ENCODE measurements at regions of chr16 and their contacts with region 1.

Region 1: DNA sequence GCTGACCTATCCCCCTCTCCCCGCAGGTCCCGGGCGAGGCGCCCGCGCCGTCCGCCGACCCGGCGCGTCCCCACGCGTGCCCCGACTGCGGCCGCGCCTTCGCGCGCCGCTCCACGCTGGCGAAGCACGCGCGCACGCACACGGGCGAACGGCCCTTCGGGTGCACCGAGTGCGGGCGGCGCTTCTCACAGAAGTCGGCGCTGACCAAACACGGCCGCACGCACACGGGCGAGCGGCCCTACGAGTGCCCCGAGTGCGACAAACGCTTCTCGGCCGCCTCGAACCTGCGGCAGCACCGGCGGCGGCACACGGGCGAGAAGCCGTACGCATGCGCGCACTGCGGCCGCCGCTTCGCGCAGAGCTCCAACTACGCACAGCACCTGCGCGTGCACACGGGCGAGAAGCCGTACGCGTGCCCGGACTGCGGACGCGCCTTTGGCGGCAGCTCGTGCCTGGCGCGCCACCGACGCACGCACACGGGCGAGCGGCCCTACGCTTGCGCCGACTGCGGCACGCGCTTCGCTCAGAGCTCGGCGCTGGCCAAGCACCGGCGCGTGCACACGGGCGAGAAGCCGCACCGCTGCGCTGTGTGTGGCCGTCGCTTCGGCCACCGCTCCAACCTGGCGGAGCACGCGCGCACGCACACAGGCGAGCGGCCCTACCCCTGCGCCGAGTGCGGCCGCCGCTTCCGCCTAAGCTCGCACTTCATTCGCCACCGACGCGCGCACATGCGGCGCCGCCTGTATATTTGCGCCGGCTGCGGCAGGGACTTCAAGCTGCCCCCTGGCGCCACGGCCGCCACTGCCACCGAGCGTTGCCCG is 10.3 kb downstream of the ZNF771 start:
- DNase-seq: peak; percentile 82 to 94 (median 88)
- ATAC-seq: peak; percentile 80 to 85
- H3K4me3 Mint-ChIP-seq: peak overlapping the region; percentile 22 to 83 (median 72)
- H3K27ac Mint-ChIP-seq: peak overlapping the region in 8 of 10 donors; percentile 15 to 91 (median 83)
- H3K4me1 Mint-ChIP-seq: peaks cover 8 to 17% (median 11%) of the 10 kb centered on the region in 4 donors
- H3K27me3 Mint-ChIP-seq: no peaks in the 10 kb centered on the region

Region 2: GRCh38 chr16:30091474-30092372 is 326.0 kb before region 1 on chr16 and contains the start of gene TBX6:
- POLR2A ChIA-PET with region 1: interaction called, 13 read pairs
- DNase-seq: peak; percentile 86 to 93 (median 92)
- ATAC-seq: peak; percentile 77 to 81
- H3K4me3 Mint-ChIP-seq: peak within 1 kb of the TSS; percentile 80 to 93 (median 91)
- H3K27ac Mint-ChIP-seq: peak within 1 kb of the TSS; percentile 88 to 98 (median 94)
- H3K4me1 Mint-ChIP-seq: peaks cover 30 to 63% (median 57%) of the 10 kb centered on the region in 4 donors
- H3K27me3 Mint-ChIP-seq: no peaks in the 10 kb centered on the region
- polyA plus RNA-seq, gene TBX6: 0.15 to 0.25 (median 0.25) TPM

Region 3: GRCh38 chr16:30378236-30379204 is 39.2 kb before region 1 on chr16:
- POLR2A ChIA-PET with region 1: interaction called, 166 read pairs
- DNase-seq: peak; percentile 76 to 100 (median 99)
- ATAC-seq: peak; percentile 74 to 79
- H3K4me3 Mint-ChIP-seq: peak overlapping the region; percentile 95 to 100 (median 98)
- H3K27ac Mint-ChIP-seq: peak overlapping the region; percentile 99 to 100 (median 100)
- H3K4me1 Mint-ChIP-seq: peaks cover 29 to 71% (median 68%) of the 10 kb centered on the region in 4 donors
- H3K27me3 Mint-ChIP-seq: no peaks in the 10 kb centered on the region

Region 4: GRCh38 chr16:30407102-30407803 is 10.5 kb before region 1 on chr16 and contains the start of gene ZNF771:
- POLR2A ChIA-PET with region 1: interaction called, 72 read pairs
- DNase-seq: peak; percentile 65 to 92 (median 80)
- ATAC-seq: peak; percentile 81 to 87
- H3K4me3 Mint-ChIP-seq: peak within 1 kb of the TSS; percentile 88 to 100 (median 97)
- H3K27ac Mint-ChIP-seq: peak within 1 kb of the TSS; percentile 82 to 96 (median 95)
- H3K4me1 Mint-ChIP-seq: peaks cover 18 to 36% (median 29%) of the 10 kb centered on the region in 4 donors
- H3K27me3 Mint-ChIP-seq: peaks cover 0 to 3% (median 0%) of the 10 kb centered on the region in 5 donors
- polyA plus RNA-seq, gene ZNF771: 2.1 to 6.7 (median 3.8) TPM

Region 5: DNA sequence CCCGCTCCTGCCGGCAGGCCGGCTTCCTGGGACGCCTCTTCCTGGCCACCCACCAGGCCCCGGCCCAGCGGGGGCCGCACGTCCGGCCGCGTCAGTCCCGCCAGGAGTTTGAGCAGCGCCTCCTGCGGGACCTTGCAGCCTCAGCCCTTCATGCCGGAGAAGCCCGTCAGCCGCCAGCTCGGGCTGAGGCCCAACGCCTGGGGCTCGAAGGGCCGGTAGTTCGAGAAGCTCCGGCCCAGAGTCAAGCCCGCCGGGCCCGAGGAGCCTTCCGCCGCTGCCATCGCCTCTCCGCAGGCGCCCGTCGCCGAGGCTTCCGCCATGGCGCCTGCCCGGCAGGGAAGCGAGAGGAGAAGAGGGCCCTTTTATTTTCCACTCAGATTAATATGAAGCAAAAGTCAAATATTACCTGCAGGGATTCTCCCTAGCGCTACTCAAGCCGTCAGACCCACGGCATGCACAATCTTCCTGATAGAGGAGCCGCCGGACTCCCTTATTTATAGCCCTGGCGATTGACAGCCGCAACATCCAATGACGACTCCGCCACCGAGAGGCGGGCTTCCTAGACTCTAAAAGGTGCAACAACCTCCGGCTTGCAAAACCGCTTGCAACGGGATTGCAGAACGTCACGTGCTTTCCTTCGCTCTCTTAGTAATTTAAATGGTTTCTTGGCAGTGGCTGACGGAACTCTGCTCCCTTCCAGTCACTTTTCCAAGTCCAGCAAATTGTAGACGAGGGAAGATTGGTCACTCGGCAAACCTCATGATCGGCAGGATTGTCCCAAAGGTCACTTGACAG is 27.9 kb after region 1 on chr16 and contains the start of gene SEPHS2:
- POLR2A ChIA-PET with region 1: interaction called, 11 read pairs
- DNase-seq: peak; percentile 83 to 99 (median 94)
- ATAC-seq: peak; percentile 97
- H3K4me3 Mint-ChIP-seq: peak within 1 kb of the TSS; percentile 86 to 98 (median 96)
- H3K27ac Mint-ChIP-seq: peak within 1 kb of the TSS; percentile 95 to 99 (median 97)
- H3K4me1 Mint-ChIP-seq: peaks cover 13 to 49% (median 43%) of the 10 kb centered on the region in 4 donors
- H3K27me3 Mint-ChIP-seq: no peaks in the 10 kb centered on the region
- polyA plus RNA-seq, gene SEPHS2: 45.5 to 60.7 (median 55.0) TPM

Region 6: DNA sequence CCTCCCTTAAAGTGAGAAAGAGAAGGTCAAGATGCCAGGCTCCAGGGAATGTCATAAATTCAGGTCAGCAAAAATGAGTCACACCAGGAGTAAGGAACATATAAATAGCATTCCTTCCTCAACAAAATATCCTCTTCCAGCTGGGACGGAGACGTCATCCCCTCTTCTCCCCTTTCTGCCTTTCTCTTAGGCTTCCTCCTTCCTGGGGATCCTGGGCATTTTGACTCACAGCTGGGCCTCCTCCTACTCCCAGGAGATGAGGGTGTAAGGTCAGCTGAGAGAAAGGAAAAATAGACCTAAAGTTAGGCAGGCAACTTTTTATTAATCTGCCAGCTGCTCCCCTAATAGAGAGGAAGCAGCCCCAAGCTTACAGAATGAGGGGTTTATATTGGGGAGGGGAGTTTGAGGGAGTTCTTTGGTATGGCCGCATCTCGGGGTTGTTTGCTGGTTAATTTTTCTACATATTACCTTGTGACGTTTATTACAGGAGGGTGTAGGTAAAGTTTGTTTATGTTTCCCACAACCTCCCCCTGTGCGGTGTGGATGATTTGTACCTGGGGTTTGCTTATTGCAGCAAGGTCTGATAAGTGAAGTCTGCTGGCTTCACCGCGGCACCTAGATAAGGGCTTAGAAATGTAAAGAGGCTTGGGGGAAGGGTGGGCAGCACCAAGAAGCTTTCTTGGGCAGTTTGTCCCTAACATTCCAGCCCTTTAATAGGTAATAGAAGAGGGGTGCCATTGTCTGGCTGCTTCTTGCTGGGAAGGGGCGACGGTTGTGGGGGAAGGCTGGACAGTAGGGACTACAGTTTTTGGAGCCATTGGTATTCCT is 124.0 kb after region 1 on chr16:
- POLR2A ChIA-PET with region 1: no interaction called
- DNase-seq: no peak
- ATAC-seq: no peak
- H3K4me3 Mint-ChIP-seq: no peak overlapping the region
- H3K27ac Mint-ChIP-seq: no peak overlapping the region
- H3K4me1 Mint-ChIP-seq: peaks cover 10 to 20% (median 16%) of the 10 kb centered on the region in 4 donors
- H3K27me3 Mint-ChIP-seq: no peaks in the 10 kb centered on the region

Region 7: DNA sequence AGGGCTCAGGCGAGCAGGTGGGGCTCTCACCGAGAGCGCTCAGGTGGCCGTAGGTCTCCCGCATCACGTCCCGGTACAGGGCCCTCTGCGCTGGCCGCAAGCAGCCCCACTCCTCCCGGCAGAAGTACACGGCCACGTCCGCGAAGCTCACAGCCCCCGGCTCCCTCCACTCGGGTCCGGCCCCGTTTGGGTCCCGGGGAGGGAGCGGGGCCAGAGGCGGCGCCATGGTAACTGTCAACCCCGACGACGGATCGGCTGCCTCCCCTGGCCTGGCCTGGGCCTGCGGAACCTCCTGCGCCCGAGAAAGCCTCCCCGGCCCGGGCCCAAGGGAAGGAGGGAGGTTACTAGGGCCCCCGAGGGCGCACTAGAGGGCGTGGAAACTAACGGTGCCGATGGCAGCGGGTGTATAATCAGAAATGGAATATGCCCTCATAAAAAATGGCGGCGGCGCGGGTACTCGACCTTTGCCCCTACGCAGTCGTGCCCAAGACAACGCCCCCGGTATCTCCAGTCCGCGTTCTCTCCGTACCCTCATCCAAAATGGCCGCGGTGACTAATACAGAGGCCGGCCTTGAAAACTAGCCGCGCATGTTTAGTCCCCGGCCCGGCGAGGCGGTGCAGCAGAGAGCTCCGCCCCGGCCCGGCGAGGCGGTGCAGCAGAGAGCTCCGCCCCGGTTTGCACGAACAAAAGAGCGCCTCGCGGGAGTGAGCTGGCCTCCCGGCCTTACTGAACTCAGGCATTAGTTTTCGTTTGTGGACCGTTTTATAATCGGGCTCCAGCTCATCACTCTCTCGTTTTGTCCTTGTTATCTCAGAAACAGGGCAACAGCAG is 140.4 kb after region 1 on chr16 and contains the start of gene ZNF764:
- POLR2A ChIA-PET with region 1: interaction called, 11 read pairs
- DNase-seq: peak; percentile 81 to 98 (median 93)
- ATAC-seq: peak; percentile 90
- H3K4me3 Mint-ChIP-seq: peak within 1 kb of the TSS; percentile 82 to 93 (median 86)
- H3K27ac Mint-ChIP-seq: peak within 1 kb of the TSS; percentile 85 to 97 (median 94)
- H3K4me1 Mint-ChIP-seq: peaks cover 13 to 53% (median 48%) of the 10 kb centered on the region in 4 donors
- H3K27me3 Mint-ChIP-seq: no peaks in the 10 kb centered on the region
- polyA plus RNA-seq, gene ZNF764: 3.6 to 6.5 (median 4.0) TPM